ENCODE measurements at regions of chr6 and their contacts with region 1.

Region 1: GRCh38 chr6:128425856-128426255 is 94.5 kb downstream of the PTPRK start:
- DNase-seq: no peak
- ATAC-seq: no peak
- H3K4me3 Mint-ChIP-seq: no peak overlapping the region
- H3K27ac Mint-ChIP-seq: no peak overlapping the region
- H3K4me1 Mint-ChIP-seq: no peaks in the 10 kb centered on the region
- H3K27me3 Mint-ChIP-seq: no peaks in the 10 kb centered on the region
- CTCF ChIP-seq: no peak

Region 2: DNA sequence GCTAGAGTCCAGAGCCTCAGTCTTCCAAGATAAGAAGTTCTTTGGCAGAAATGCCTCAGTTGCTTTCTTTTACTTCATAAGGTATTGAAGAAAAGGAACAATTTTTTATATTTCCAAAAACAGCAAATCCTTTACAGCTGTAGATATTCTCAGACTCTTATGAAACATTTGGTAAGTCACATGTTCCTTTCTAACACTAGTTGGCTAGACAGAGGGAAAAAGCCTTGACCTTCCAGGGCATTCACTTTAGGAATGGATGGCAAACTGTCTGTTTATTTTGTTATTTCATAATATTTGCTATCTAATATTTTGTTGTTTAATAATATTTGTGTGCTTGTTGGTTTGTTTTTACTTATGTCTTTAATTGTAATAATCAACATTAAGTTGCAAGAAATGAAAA is 46.3 kb before region 1 on chr6:
- CTCF ChIA-PET with region 1: no interaction called
- POLR2A ChIA-PET with region 1: no interaction called
- intact Hi-C with region 1: loop called (anchors 5 kb)
- DNase-seq: no peak
- ATAC-seq: no peak
- H3K4me3 Mint-ChIP-seq: no peak overlapping the region
- H3K27ac Mint-ChIP-seq: no peak overlapping the region
- H3K4me1 Mint-ChIP-seq: no peaks in the 10 kb centered on the region
- H3K27me3 Mint-ChIP-seq: no peaks in the 10 kb centered on the region
- CTCF ChIP-seq: no peak